ENCODE measurements at regions of chr1 and their contacts with region 1.

Region 1: DNA sequence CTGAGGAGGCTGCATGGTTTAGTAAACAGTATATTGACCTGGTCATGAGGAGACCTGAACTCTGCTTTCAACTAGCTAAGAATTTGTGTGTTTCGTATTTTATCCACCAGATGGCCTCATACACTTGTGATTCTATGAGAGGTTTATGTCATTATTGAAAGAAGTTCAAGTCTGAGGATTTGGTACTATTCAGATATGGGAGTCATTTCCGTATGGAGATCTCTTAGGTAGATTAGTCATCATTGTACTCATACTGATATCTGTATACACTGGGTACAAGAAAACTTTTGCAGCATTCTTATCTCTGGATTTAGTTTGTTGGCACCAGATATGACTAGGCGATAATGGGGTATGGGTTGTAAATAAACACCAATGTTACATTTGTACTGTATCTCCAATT is 26.6 kb downstream of the ATF6 start:
- DNase-seq: no peak
- H3K4me3 Mint-ChIP-seq: no peak overlapping the region
- H3K27ac Mint-ChIP-seq: peak overlapping the region; percentile 52
- H3K4me1 Mint-ChIP-seq: peaks cover 22% of the 10 kb centered on the region
- H3K27me3 Mint-ChIP-seq: no peaks in the 10 kb centered on the region

Region 2: DNA sequence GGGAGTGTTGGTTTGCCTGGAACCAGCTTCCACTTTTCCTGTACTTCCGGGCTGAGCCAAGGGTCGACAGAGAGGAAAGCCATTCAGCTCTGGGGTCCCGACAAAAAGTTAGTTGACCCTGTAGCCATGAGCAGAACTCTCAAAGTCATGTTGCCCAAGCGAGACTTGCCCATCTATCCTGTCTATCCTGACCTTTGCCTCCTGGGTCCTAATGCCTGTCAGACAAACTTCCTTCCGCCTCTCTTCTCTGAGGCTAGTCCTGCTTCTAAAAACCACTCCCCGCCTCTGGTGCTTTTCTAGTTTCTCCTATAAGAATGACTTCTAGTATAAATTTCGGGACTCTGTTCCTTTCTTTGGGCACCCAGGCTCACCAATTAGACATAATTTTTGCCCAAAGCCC is 541.9 kb before region 1 on chr1:
- CTCF ChIA-PET with region 1: no interaction called
- POLR2A ChIA-PET with region 1: no interaction called
- intact Hi-C with region 1: no loop called
- DNase-seq: no peak
- H3K4me3 Mint-ChIP-seq: no peak overlapping the region
- H3K27ac Mint-ChIP-seq: no peak overlapping the region
- H3K4me1 Mint-ChIP-seq: no peaks in the 10 kb centered on the region
- H3K27me3 Mint-ChIP-seq: peaks cover 1% of the 10 kb centered on the region

Region 3: GRCh38 chr1:161772397-161772796 is 20.3 kb before region 1 on chr1:
- CTCF ChIA-PET with region 1: interaction called, 19 read pairs
- POLR2A ChIA-PET with region 1: no interaction called
- intact Hi-C with region 1: loop called (anchors 2 kb)
- DNase-seq: no peak
- H3K4me3 Mint-ChIP-seq: no peak overlapping the region
- H3K27ac Mint-ChIP-seq: no peak overlapping the region
- H3K4me1 Mint-ChIP-seq: peaks cover 22% of the 10 kb centered on the region
- H3K27me3 Mint-ChIP-seq: no peaks in the 10 kb centered on the region

Region 4: DNA sequence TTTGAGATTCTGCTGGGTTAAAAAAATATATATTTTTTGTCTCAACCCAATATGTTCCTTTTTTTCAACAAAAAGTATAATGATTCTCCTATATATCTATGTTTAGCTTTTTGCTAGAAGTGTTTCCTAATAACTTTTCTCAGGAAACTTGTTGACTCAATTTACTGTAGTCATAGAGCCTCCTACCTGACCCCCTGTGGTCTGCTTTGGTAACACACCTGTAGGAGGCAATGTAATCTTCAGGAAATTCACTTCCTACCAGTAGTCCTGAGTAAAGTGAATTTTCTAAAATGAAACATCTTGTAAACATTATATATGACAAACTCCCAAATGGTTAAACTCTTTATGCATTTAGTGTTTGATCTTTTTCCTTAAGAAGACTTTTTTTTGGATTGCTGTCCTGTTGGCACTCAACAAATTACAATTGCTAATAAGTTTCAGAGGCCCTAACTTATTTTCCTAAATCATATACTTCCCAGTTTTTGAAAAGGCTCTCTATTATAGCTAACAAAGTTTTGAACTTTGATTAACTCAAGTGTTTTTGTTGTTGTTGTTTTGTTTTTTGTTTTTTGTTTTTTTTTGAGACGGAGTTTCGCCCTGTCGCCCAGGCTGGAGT is 112.6 kb after region 1 on chr1:
- CTCF ChIA-PET with region 1: interaction called, 17 read pairs
- POLR2A ChIA-PET with region 1: no interaction called
- intact Hi-C with region 1: loop called (anchors 2 kb)
- DNase-seq: peak; percentile 45
- H3K4me3 Mint-ChIP-seq: no peak overlapping the region
- H3K27ac Mint-ChIP-seq: no peak overlapping the region
- H3K4me1 Mint-ChIP-seq: peaks cover 19% of the 10 kb centered on the region
- H3K27me3 Mint-ChIP-seq: no peaks in the 10 kb centered on the region

Region 5: GRCh38 chr1:161954050-161954449 is 161.3 kb after region 1 on chr1:
- CTCF ChIA-PET with region 1: no interaction called
- POLR2A ChIA-PET with region 1: no interaction called
- intact Hi-C with region 1: loop called (anchors 2 kb)
- DNase-seq: no peak
- H3K4me3 Mint-ChIP-seq: no peak overlapping the region
- H3K27ac Mint-ChIP-seq: no peak overlapping the region
- H3K4me1 Mint-ChIP-seq: peaks cover 33% of the 10 kb centered on the region
- H3K27me3 Mint-ChIP-seq: no peaks in the 10 kb centered on the region

Region 6: GRCh38 chr1:162023547-162024501 is 231.1 kb after region 1 on chr1 and contains the start of gene OLFML2B:
- CTCF ChIA-PET with region 1: interaction called, 17 read pairs
- POLR2A ChIA-PET with region 1: no interaction called
- intact Hi-C with region 1: loop called (anchors 1 kb)
- DNase-seq: peak; percentile 59
- H3K4me3 Mint-ChIP-seq: peak within 1 kb of the TSS; percentile 70
- H3K27ac Mint-ChIP-seq: no peak within 1 kb of the TSS
- H3K4me1 Mint-ChIP-seq: peaks cover 6% of the 10 kb centered on the region
- H3K27me3 Mint-ChIP-seq: peaks cover 34% of the 10 kb centered on the region
- total RNA-seq, gene OLFML2B: not detected

Region 7: DNA sequence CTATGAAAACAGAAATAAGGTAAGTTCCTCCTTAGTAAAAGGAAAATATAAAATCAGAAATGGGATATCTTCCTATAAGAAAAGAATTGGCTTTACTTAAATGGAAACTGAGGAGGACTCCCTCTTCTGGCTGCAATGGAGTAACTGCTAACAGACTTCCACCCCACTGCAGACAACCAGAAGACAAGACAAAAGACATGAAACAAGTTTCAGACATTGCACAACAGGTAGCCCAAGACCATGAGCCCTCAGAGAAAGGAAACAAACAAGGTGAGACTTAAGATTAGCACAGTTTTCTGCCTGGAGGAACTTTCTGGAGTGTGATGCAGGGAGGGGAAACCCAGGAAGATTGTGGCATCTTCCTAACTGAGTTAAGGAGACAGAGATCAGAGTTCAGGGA is 247.9 kb after region 1 on chr1:
- CTCF ChIA-PET with region 1: interaction called, 144 read pairs
- POLR2A ChIA-PET with region 1: interaction called, 6 read pairs
- intact Hi-C with region 1: loop called (anchors 1 kb)
- DNase-seq: no peak
- H3K4me3 Mint-ChIP-seq: no peak overlapping the region
- H3K27ac Mint-ChIP-seq: no peak overlapping the region
- H3K4me1 Mint-ChIP-seq: no peaks in the 10 kb centered on the region
- H3K27me3 Mint-ChIP-seq: peaks cover 10% of the 10 kb centered on the region